ENCODE measurements at regions of chr2 and their contacts with region 1.

Region 1: GRCh38 chr2:41869542-41870264 is 178.1 kb upstream of the PKDCC start:
- DNase-seq: peak; percentile 75 to 76
- ATAC-seq: peak; percentile 89 to 96
- H3K4me3 ChIP-seq: no peak overlapping the region
- H3K27ac ChIP-seq: peak overlapping the region; percentile 73 to 85
- H3K4me1 ChIP-seq: peaks cover 62% of the 10 kb centered on the region
- CTCF ChIP-seq: peak; percentile 96
- EP300 ChIP-seq: no peak
- POLR2A ChIP-seq: no peak
- RAD21 ChIP-seq: peak; percentile 99 to 100

Region 2: DNA sequence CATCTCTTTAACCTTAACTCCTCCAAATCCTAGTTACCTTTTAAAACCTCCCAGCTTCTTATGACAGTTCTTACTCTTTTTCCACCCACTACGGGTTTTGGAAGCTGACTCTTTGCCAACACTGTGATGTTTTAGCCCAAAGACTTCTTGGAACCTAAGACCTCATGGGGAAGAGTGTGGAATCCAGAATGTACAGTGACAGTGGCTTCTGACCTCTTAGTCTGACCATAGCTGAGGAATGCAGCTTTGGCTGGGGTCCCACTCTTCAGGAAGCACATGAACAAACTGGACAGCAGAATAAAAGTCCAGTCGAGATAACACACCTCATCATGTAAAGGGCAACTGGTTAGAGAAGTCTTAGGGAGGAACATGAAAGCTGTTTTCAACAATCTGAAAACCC is 17.1 kb after region 1 on chr2:
- CTCF ChIA-PET with region 1: interaction called, 62 read pairs
- POLR2A ChIA-PET with region 1: no interaction called
- DNase-seq: no peak
- ATAC-seq: no peak
- H3K4me3 ChIP-seq: no peak overlapping the region
- H3K27ac ChIP-seq: 0 out of 6 replicates have a peak overlapping the region, but pooled peaks of 1 of the 2 experiments have one; percentile 6
- H3K4me1 ChIP-seq: 0 out of 3 replicates have a peak, but pooled peaks cover 4% of the 10 kb centered on the region
- CTCF ChIP-seq: no peak
- EP300 ChIP-seq: no peak
- POLR2A ChIP-seq: no peak
- RAD21 ChIP-seq: no peak

Region 3: GRCh38 chr2:41933585-41934320 is 64.0 kb after region 1 on chr2:
- CTCF ChIA-PET with region 1: interaction called, 87 read pairs
- POLR2A ChIA-PET with region 1: interaction called, 3 read pairs
- DNase-seq: peak; percentile 79 to 88
- ATAC-seq: peak; percentile 74 to 75
- H3K4me3 ChIP-seq: no peak overlapping the region
- H3K27ac ChIP-seq: peak overlapping the region; percentile 74 to 91
- H3K4me1 ChIP-seq: peaks cover 88% of the 10 kb centered on the region
- CTCF ChIP-seq: no peak
- EP300 ChIP-seq: peak; percentile 79 to 93; a peak in 4 of 5 replicates
- POLR2A ChIP-seq: no peak
- RAD21 ChIP-seq: peak in 1 of 2 experiments; percentile 34; a peak in 1 of 5 replicates

Region 4: DNA sequence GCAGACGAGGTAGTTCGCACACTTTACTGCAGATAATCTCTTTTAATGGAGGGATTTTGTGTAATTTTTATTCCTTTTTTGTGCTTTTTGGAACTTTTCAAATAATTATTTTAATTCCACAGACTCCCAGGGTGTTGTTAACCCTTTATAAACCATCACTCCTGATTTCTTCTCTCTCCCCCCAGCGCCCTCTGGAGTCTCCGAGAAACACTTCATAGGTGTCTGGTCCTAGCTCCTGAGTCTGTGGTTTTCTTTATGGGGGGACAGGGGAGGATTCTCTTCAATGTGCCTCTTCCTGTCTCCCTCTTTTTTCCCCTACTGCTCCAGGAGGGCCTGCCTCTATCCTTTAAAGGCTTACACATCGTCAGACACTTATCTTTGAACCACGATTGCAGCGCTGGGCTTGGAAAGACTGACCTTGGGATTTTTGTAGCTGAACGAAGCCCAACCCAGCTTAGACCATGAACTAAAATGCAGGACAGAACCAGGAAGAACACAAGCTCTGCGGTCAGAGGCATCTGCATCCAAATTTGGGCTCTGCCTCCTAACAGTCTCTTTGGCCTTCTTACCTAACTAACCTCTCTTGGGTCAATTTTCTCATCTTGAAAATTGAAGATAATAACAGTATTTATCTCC is 171.1 kb after region 1 on chr2:
- CTCF ChIA-PET with region 1: interaction called, 24 read pairs
- POLR2A ChIA-PET with region 1: no interaction called
- DNase-seq: no peak
- ATAC-seq: no peak
- H3K4me3 ChIP-seq: no peak overlapping the region
- H3K27ac ChIP-seq: no peak overlapping the region
- H3K4me1 ChIP-seq: no peaks in the 10 kb centered on the region
- CTCF ChIP-seq: no peak
- EP300 ChIP-seq: no peak
- POLR2A ChIP-seq: no peak
- RAD21 ChIP-seq: no peak

Region 5: DNA sequence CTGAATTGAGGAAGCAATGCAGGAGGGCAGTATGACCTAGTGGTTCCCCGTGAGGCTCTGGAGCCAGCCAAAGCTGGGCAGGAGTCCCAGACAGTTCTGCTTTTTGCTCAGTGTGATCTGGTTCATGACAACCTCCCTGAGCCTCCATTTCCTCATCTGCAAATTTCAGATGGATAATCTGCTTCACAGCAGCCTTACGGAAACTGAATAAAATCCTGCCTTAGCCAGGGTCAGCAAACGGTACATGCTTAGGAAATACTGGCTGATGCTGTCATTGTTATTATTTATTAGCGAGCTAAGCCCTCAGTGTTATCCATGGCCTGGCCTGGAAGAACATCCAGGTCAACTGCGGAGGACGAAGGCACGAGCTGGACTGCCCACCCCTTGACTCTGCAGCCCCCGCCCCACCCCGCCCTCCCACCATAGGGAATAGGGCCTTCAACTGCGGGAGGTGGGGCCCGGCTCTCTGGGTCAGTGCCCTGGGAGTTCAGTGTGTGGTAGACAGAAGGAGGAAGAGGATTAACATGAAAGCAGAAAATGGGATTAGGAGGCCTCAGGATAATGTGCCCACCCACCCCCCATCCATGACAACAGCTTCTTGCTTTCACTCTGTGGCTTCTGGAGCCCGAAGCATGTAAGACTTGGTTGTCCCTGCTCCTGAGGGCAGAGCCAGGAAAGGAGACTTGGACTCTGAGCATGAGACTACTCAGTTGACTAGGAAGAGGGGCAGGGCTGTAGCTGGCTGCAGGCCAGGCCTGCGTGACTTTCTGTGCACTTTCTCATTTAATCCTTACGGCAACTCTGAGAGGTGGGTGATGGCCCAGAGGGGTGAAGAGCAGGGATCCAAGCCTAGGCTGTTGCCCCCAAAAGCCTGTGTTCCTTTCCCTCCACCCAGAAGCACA is 191.3 kb after region 1 on chr2:
- CTCF ChIA-PET with region 1: interaction called, 65 read pairs
- POLR2A ChIA-PET with region 1: no interaction called
- DNase-seq: no peak
- ATAC-seq: no peak
- H3K4me3 ChIP-seq: no peak overlapping the region
- H3K27ac ChIP-seq: peak overlapping the region; percentile 34 to 67; a peak in 4 of 6 replicates
- H3K4me1 ChIP-seq: peaks cover 60% of the 10 kb centered on the region
- CTCF ChIP-seq: no peak
- EP300 ChIP-seq: no peak
- POLR2A ChIP-seq: no peak
- RAD21 ChIP-seq: no peak

Region 6: DNA sequence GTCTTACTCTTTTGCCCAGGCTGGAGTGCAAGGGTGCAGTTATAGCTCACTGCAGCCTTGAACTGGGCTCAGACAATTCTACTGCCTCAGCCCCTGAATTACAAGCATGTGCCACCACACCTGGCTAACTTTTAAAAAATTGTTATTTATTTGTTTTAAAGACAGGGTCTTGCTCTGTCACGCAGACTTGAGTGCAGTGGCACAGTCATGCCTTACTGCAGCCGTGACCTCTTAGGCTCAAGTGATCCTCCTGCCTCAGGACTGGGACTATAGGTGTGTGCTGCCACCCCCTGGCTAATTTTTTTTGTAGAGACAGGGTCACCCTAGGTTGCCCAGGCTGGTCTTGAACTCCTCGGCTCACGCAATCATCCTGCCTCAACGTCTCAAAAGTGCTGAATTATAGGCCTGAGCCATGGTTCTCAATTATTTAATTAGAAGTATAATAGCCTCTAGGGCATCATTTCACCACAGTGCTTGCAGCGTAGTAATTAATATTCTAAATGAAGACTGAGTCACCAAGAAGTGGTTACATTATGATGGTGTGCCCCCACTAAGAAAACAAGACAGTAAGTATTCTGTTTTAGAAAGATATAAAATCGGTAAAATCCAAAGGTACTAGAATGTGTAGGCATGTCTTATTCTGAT is 369.1 kb after region 1 on chr2:
- CTCF ChIA-PET with region 1: interaction called, 13 read pairs
- POLR2A ChIA-PET with region 1: no interaction called
- DNase-seq: peak in 1 of 2 experiments; percentile 76
- ATAC-seq: peak; percentile 97 to 98
- H3K4me3 ChIP-seq: no peak overlapping the region
- H3K27ac ChIP-seq: 0 out of 6 replicates have a peak overlapping the region, but pooled peaks of 1 of the 2 experiments have one; percentile 5
- H3K4me1 ChIP-seq: peaks cover 29% of the 10 kb centered on the region
- CTCF ChIP-seq: peak; percentile 80
- EP300 ChIP-seq: no peak
- POLR2A ChIP-seq: no peak
- RAD21 ChIP-seq: peak; percentile 93 to 95